Activated naive CD4-positive, alpha-beta T cell treated with anti-CD3 and anti-CD28 coated beads for 36 hours (primary cell): ENCODE measurements at regions of chr5 and their contacts with region 1.

Region 1: GRCh38 chr5:66828548-66829357 is 232.6 kb downstream of the MAST4 start:
- DNase-seq: peak; percentile 84
- H3K4me3 Mint-ChIP-seq: peak overlapping the region; percentile 87
- H3K27ac Mint-ChIP-seq: peak overlapping the region; percentile 84
- H3K4me1 Mint-ChIP-seq: peaks cover 24% of the 10 kb centered on the region
- H3K27me3 Mint-ChIP-seq: peaks cover 29% of the 10 kb centered on the region

Region 2: GRCh38 chr5:65624571-65625555 is 1203.9 kb before region 1 on chr5 and contains the starts of genes SHLD3 and TRAPPC13:
- CTCF ChIA-PET with region 1: no interaction called
- intact Hi-C with region 1: loop called (anchors 10 kb)
- DNase-seq: peak; percentile 88
- H3K4me3 Mint-ChIP-seq: peak within 1 kb of the TSS; percentile 99
- H3K27ac Mint-ChIP-seq: peak within 1 kb of the TSS; percentile 94
- H3K4me1 Mint-ChIP-seq: peaks cover 50% of the 10 kb centered on the region
- H3K27me3 Mint-ChIP-seq: no peaks in the 10 kb centered on the region
- total RNA-seq, gene SHLD3: 2.9 to 3.1 TPM
- total RNA-seq, gene TRAPPC13: 25.7 to 29.0 TPM

Region 3: GRCh38 chr5:65721720-65722574 is 1106.8 kb before region 1 on chr5 and contains the starts of genes NLN and SGTB:
- CTCF ChIA-PET with region 1: no interaction called
- intact Hi-C with region 1: loop called (anchors 10 kb)
- DNase-seq: peak; percentile 80
- H3K4me3 Mint-ChIP-seq: peak within 1 kb of the TSS; percentile 88
- H3K27ac Mint-ChIP-seq: peak within 1 kb of the TSS; percentile 94
- H3K4me1 Mint-ChIP-seq: peaks cover 13% of the 10 kb centered on the region
- H3K27me3 Mint-ChIP-seq: no peaks in the 10 kb centered on the region
- total RNA-seq, gene NLN: 32.4 to 35.5 TPM
- total RNA-seq, gene SGTB: 16.1 to 17.3 TPM

Region 4: DNA sequence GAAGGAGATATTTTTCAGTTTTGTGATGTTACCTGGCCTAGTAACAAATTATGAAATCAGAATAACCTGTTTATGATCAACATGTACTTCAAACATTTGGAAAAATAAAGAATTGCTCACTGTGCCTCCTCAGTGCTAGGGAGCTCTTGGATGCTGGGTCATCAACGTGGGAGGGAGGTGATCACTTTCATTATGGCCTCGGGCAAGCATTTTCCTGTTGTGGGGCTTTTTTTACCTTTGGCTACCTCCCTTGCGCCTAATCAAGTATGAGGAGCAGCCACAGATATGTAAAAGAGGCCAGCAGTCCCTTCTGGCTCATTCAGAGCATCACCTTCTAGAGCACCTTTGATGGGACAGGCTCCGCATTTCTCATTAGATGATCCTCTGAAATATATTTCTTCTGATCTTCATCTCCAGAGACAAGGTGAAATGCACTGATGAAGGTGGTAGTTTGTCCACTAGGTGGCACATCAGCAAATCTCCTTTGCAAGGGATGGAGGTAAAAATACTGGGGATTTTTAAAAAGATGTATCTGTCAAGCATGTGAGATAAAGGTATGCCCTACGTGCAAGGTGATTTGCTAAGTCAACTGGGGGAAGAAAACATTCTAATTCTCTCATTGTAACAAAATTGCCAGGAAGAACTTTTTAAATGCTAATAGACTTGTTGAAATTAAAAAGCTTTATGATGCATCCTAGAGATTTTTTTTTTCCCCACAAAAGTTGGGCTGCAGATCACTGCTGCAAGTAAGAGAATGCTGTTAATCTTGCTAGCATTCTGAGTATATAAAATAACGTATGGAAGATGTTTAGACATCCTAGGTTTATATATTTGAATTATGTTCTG is 14.4 kb before region 1 on chr5:
- CTCF ChIA-PET with region 1: interaction called, 25 read pairs
- intact Hi-C with region 1: loop called (anchors 1 kb)
- DNase-seq: peak; percentile 79
- H3K4me3 Mint-ChIP-seq: no peak overlapping the region
- H3K27ac Mint-ChIP-seq: no peak overlapping the region
- H3K4me1 Mint-ChIP-seq: peaks cover 3% of the 10 kb centered on the region
- H3K27me3 Mint-ChIP-seq: no peaks in the 10 kb centered on the region

Region 5: GRCh38 chr5:66840511-66841013 is 11.8 kb after region 1 on chr5:
- CTCF ChIA-PET with region 1: interaction called, 18 read pairs
- intact Hi-C with region 1: loop called (anchors 1 kb)
- DNase-seq: peak; percentile 63
- H3K4me3 Mint-ChIP-seq: peak overlapping the region; percentile 10
- H3K27ac Mint-ChIP-seq: peak overlapping the region; percentile 83
- H3K4me1 Mint-ChIP-seq: peaks cover 27% of the 10 kb centered on the region
- H3K27me3 Mint-ChIP-seq: peaks cover 28% of the 10 kb centered on the region

Region 6: GRCh38 chr5:66864331-66864840 is 35.6 kb after region 1 on chr5:
- CTCF ChIA-PET with region 1: interaction called, 5 read pairs
- intact Hi-C with region 1: loop called (anchors 1 kb)
- DNase-seq: peak; percentile 39
- H3K4me3 Mint-ChIP-seq: no peak overlapping the region
- H3K27ac Mint-ChIP-seq: no peak overlapping the region
- H3K4me1 Mint-ChIP-seq: no peaks in the 10 kb centered on the region
- H3K27me3 Mint-ChIP-seq: peaks cover 30% of the 10 kb centered on the region

Region 7: GRCh38 chr5:66891183-66891925 is 62.6 kb after region 1 on chr5:
- CTCF ChIA-PET with region 1: no interaction called
- intact Hi-C with region 1: no loop called
- DNase-seq: no peak
- H3K4me3 Mint-ChIP-seq: no peak overlapping the region
- H3K27ac Mint-ChIP-seq: no peak overlapping the region
- H3K4me1 Mint-ChIP-seq: no peaks in the 10 kb centered on the region
- H3K27me3 Mint-ChIP-seq: peaks cover 22% of the 10 kb centered on the region

Region 8: DNA sequence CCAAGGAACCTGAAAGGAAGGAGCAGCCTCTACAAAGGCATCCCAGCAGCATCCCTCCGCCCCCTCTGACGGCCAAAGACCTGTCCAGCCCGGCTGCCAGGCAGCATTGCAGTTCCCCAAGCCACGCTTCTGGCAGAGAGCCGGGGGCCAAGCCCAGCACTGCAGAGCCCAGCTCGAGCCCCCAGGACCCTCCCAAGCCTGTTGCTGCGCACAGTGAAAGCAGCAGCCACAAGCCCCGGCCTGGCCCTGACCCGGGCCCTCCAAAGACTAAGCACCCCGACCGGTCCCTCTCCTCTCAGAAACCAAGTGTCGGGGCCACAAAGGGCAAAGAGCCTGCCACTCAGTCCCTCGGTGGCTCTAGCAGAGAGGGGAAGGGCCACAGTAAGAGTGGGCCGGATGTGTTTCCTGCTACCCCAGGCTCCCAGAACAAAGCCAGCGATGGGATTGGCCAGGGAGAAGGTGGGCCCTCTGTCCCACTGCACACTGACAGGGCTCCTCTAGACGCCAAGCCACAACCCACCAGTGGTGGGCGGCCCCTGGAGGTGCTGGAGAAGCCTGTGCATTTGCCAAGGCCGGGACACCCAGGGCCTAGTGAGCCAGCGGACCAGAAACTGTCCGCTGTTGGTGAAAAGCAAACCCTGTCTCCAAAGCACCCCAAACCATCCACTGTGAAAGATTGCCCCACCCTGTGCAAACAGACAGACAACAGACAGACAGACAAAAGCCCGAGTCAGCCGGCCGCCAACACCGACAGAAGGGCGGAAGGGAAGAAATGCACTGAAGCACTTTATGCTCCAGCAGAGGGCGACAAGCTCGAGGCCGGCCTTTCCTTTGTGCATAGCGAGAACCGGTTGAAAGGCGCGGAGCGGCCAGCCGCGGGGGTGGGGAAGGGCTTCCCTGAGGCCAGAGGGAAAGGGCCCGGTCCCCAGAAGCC is 337.0 kb after region 1 on chr5:
- CTCF ChIA-PET with region 1: no interaction called
- intact Hi-C with region 1: loop called (anchors 2 kb)
- DNase-seq: peak; percentile 91
- H3K4me3 Mint-ChIP-seq: peak overlapping the region; percentile 76
- H3K27ac Mint-ChIP-seq: peak overlapping the region; percentile 88
- H3K4me1 Mint-ChIP-seq: peaks cover 57% of the 10 kb centered on the region
- H3K27me3 Mint-ChIP-seq: no peaks in the 10 kb centered on the region